ENCODE measurements at regions of chr11 and their contacts with region 1.

Region 1: DNA sequence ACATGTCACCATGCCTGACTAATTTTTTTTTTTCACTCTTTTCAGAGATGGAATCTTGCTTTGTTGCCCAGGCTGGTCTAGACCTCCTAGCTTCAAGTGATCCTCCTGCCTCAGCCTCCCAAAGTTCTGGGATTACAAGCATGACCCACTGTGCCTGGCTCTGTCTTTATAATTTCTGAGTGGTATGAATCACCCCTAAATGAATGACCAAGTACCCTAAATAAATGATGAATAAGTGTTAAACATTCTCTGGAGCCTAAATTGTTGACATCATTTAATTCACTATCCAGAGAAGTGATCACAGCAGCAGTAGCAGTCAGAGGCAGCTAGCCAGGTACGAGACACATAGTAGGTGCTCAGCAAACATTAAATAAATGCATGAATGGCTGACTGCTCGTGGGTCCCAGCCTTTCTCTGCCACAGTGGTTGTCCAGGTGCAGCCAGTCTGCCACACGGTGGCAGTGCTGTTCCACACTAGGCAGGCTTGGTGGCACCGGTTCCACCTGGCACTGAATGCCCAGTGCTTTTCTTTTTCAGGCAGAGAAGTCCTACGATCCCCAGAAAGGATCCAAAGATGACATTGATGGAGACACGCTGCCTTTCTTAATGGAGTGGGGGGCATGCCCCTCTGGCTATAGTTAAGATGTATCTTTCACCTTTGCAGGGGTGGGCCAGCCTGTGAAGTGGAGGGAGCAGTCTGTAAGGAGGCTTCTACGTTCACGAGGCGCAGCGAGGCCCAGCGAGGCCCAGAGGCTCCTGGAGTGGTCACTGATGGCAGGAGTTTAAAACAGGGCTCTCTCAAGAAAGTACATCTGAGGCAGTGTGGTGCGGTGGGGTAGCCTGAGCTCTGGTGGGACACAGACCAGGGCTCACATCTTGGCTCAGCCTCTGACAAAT is 8.7 kb upstream of the TTC12 start:
- DNase-seq: peak; percentile 4 to 69
- H3K4me3 ChIP-seq: no peak overlapping the region
- H3K4me1 ChIP-seq: no peaks in the 10 kb centered on the region
- H3K27me3 ChIP-seq: peaks cover 2% of the 10 kb centered on the region; the same call in 1 of the 2 replicates

Region 2: GRCh38 chr11:113242767-113243397 is 62.8 kb before region 1 on chr11:
- in situ Hi-C with region 1: no loop called
- DNase-seq: no peak
- H3K4me3 ChIP-seq: no peak overlapping the region
- H3K4me1 ChIP-seq: no peaks in the 10 kb centered on the region
- H3K27me3 ChIP-seq: no peaks in the 10 kb centered on the region

Region 3: DNA sequence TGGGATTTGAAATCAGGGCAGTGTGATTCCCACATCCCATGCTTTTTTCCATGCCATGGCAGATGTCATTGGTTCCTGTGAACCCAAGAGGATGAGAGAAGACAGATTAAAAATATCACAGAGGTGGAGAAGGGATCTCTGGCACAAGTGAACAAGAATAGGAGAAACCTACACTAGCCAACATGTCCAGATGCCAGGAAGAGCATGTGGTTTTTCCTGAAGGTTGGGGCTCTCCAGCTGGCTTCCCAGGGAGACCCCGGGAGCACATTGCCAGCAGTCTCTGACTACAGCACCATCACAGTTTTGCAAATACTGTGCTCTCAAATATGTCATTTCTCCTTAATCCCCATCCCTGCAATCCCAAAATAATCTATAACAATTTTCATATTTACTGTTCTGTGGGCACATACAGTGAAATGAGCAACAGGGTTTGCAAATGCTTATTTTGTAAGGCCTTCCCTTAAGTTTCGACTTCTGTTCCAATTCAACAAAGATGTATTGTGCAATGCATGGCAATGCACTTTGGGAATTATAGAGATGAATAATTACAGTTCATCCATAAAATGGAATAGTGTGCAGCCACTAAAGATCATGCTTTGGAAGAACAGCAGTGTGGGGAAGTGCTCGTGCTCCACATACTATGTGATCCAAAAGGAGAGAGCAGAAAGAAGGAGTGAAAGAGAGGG is 86.7 kb after region 1 on chr11:
- in situ Hi-C with region 1: no loop called
- DNase-seq: no peak
- H3K4me3 ChIP-seq: no peak overlapping the region
- H3K4me1 ChIP-seq: no peaks in the 10 kb centered on the region
- H3K27me3 ChIP-seq: 0 out of 2 replicates have a peak, but pooled peaks cover 11% of the 10 kb centered on the region

Region 4: DNA sequence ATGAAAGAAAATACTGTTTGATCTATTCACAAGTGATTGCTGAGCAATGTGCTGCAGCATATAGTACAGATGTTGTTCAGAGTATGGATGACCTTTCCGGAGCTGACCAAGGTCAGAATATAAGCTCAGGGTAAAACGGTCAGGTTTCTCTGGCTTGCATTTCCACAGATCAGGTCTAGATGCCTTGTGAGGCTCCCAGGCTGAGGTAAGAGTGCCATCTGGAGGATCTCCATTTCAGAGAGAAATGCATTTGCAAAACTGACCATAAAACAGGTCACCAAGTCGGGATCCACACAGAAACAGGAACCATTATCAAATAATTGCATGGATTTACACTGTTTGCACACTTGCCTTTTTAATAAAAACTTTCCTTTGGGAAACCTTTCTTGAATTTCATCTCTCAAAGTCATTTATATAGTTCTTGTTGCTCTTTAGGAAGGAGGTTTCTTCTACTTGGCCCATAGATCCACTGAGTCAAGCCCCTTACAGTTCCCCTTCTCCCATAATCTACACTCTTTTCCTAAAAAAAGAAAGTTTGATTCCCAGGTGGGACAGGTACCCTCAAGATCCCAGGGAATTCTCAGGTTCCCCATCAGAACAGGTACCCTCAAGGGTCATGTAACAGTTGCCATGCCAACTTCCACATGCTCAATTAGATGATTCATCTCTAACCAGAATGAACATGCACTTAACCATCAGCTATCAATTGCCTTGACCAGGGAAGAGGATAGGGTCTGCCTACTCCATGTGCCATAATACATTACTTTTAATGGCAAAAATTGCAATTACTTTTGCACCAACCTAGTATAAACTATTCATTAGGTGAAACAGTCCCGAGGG is 425.4 kb after region 1 on chr11:
- in situ Hi-C with region 1: loop called (anchors 10 kb)
- DNase-seq: peak; percentile 23 to 25
- H3K4me3 ChIP-seq: no peak overlapping the region
- H3K4me1 ChIP-seq: no peaks in the 10 kb centered on the region
- H3K27me3 ChIP-seq: no peaks in the 10 kb centered on the region

Region 5: GRCh38 chr11:113796663-113797259 is 491.1 kb after region 1 on chr11:
- in situ Hi-C with region 1: loop called (anchors 5 kb)
- DNase-seq: peak; percentile 40 to 55
- H3K4me3 ChIP-seq: no peak overlapping the region
- H3K4me1 ChIP-seq: no peaks in the 10 kb centered on the region
- H3K27me3 ChIP-seq: no peaks in the 10 kb centered on the region

Region 6: GRCh38 chr11:114099392-114100178 is 793.9 kb after region 1 on chr11:
- in situ Hi-C with region 1: no loop called
- DNase-seq: no peak
- H3K4me3 ChIP-seq: no peak overlapping the region
- H3K4me1 ChIP-seq: peaks cover 4% of the 10 kb centered on the region; the same call in 1 of the 2 replicates
- H3K27me3 ChIP-seq: peaks cover 14% of the 10 kb centered on the region; the same call in 1 of the 2 replicates